Activated B cell treated with CpG ODN at 0.5 μM for 24 hours (primary cell): ENCODE measurements at regions of chr2 and their contacts with region 1.

Region 1: DNA sequence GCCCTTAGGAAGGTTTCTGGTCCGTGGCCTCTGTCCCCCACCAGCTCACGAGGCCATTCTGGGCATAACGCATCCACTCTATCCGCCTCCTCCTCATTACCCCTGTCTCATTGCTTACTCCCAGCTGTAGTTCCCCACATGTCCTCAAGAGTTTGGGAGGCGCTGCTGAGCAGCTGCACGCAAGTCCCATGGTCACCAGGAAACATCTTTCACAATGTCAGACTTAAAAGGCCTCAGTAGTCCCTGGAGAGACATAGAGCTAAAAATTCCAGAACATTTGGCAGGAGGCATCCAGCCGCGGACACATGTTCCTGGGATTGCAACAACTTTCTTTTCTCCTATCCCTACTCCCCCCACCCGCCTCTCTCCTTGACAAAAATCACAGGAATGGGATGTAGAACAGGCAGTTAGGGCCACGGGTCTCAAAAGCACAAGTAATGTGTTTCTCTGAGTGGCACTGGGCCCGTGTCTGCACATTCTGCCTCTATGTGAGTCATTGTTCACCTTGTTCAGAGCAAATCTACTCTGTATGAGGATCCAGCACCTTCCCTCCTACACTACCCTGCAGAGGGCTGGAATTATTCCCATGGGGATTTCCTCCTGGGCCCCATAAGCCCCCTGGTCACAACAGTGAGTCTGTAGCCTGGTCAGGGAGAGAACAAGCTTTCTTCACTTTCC is 8.1 kb downstream of the LBH start:
- DNase-seq: peak; percentile 60
- ATAC-seq: peak; percentile 71
- H3K4me3 Mint-ChIP-seq: peak overlapping the region; percentile 21
- H3K27ac Mint-ChIP-seq: peak overlapping the region; percentile 94
- H3K4me1 Mint-ChIP-seq: peaks cover 92% of the 10 kb centered on the region
- H3K27me3 Mint-ChIP-seq: no peaks in the 10 kb centered on the region
- CTCF ChIP-seq: peak; percentile 44

Region 2: DNA sequence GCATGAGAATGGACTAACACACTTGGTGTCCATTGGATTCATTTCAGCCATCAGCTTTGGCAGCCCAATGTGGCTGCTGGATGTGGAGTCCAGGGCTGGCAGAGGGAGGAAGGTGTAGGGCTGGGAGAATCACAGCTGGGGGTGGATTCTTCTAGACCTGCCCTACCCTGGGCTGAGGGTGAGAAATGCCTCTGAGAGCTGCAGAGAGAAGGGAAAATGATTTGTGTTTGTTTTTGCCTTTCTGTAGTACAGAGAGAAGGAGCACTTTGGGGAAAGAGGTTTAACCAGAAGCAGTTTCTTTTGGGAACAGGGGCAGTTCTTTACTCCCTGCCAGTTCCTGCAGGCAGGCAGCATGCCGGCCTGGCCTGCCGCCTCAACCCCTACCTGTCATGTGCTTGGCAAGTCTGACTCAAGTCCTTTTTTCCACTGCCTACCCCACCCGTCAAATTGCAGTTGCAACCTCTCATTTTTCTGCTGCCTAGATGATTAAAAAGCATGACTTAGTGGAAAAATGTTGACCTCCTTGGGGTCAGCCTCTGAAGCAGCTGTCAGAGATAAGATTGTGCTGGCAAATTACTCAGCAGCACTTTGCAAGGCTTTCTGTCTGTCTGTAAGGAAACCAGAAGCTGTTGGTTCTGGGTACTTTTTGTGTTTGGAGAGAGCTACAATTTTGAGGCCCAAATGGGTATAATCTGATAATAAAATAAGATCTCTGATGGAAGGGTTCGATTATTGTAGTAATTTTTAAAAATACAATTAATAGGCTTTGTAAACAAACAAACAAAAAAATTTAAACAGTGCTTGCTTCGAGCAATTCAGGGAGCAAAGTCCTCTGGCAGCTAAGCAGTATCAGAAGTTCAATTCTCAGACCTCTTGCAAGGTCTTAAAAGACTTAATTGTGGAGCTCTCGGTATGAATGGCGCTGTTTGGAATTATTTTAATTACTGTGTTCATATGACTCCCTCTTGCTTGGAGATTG is 13.6 kb after region 1 on chr2:
- CTCF ChIA-PET with region 1: interaction called, 10 read pairs
- POLR2A ChIA-PET with region 1: interaction called, 5 read pairs
- intact Hi-C with region 1: loop called (anchors 2 kb)
- DNase-seq: no peak
- ATAC-seq: peak; percentile 70
- H3K4me3 Mint-ChIP-seq: peak overlapping the region; percentile 1
- H3K27ac Mint-ChIP-seq: peak overlapping the region; percentile 85
- H3K4me1 Mint-ChIP-seq: peaks cover 72% of the 10 kb centered on the region
- H3K27me3 Mint-ChIP-seq: no peaks in the 10 kb centered on the region
- CTCF ChIP-seq: no peak